Panc1 (cell line): ENCODE measurements at regions of chr12 and their contacts with region 1.

Region 1: GRCh38 chr12:104467346-104467837 is 10.6 kb downstream of the CHST11 start:
- DNase-seq: no peak
- ATAC-seq: no peak
- H3K4me3 ChIP-seq: no peak overlapping the region
- H3K27ac ChIP-seq: no peak overlapping the region
- H3K4me1 ChIP-seq: peaks cover 4% of the 10 kb centered on the region; the same call in 1 of the 2 replicates
- H3K27me3 ChIP-seq: no peaks in the 10 kb centered on the region; the same call in 1 of the 2 replicates
- CTCF ChIP-seq: no peak

Region 2: GRCh38 chr12:104201238-104202001 is 266.0 kb before region 1 on chr12:
- CTCF ChIA-PET with region 1: no interaction called
- POLR2A ChIA-PET with region 1: no interaction called
- in situ Hi-C with region 1: no loop called
- intact Hi-C with region 1: no loop called
- DNase-seq: peak; percentile 61
- ATAC-seq: peak; percentile 95
- H3K4me3 ChIP-seq: peak overlapping the region in 1 of 2 experiments; percentile 7; a peak in 1 of 4 replicates
- H3K27ac ChIP-seq: peak overlapping the region; percentile 80
- H3K4me1 ChIP-seq: peaks cover 6% of the 10 kb centered on the region; the same call in 1 of the 2 replicates
- H3K27me3 ChIP-seq: no peaks in the 10 kb centered on the region
- CTCF ChIP-seq: peak; percentile 86

Region 3: GRCh38 chr12:104615048-104615561 is 147.7 kb after region 1 on chr12:
- CTCF ChIA-PET with region 1: no interaction called
- POLR2A ChIA-PET with region 1: interaction called, 11 read pairs
- in situ Hi-C with region 1: no loop called
- intact Hi-C with region 1: no loop called
- DNase-seq: no peak
- ATAC-seq: no peak
- H3K4me3 ChIP-seq: no peak overlapping the region
- H3K27ac ChIP-seq: no peak overlapping the region
- H3K4me1 ChIP-seq: no peaks in the 10 kb centered on the region
- H3K27me3 ChIP-seq: no peaks in the 10 kb centered on the region; the same call in 1 of the 2 replicates
- CTCF ChIP-seq: no peak